HEK293T (cell line): ENCODE measurements at regions of chr3 and their contacts with region 1.

Region 1: GRCh38 chr3:128969993-128970739 is 23.7 kb downstream of the CFAP92 start:
- DNase-seq: peak; percentile 57

Region 2: DNA sequence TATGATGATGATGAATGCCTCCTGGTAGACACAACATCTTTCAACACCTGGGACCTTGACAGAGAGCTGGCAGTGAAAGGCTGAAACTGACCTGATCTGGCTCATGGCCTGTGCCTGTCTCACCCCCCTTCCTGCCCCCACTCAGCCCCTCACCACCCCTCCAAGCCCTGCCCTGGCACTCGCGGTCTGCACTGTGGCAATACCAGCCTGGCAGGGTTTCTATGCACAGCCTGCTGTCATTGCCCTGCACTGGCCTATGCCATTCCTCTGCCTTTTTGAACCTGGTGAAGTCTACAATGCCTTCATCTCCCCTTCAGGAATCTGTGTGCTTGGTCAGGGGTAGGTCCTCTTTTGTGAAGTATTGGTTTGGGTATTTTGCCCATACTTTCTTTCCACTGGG is 34.2 kb before region 1 on chr3:
- CTCF ChIA-PET with region 1: interaction called, 12 read pairs
- POLR2A ChIA-PET with region 1: no interaction called
- DNase-seq: no peak

Region 3: GRCh38 chr3:128983293-128984069 is 13.3 kb after region 1 on chr3:
- CTCF ChIA-PET with region 1: interaction called, 18 read pairs
- POLR2A ChIA-PET with region 1: no interaction called
- DNase-seq: no peak

Region 4: GRCh38 chr3:129052675-129053074 is 82.5 kb after region 1 on chr3:
- CTCF ChIA-PET with region 1: interaction called, 20 read pairs
- POLR2A ChIA-PET with region 1: no interaction called
- DNase-seq: no peak